ENCODE measurements at regions of chr7 and their contacts with region 1.

Region 1: DNA sequence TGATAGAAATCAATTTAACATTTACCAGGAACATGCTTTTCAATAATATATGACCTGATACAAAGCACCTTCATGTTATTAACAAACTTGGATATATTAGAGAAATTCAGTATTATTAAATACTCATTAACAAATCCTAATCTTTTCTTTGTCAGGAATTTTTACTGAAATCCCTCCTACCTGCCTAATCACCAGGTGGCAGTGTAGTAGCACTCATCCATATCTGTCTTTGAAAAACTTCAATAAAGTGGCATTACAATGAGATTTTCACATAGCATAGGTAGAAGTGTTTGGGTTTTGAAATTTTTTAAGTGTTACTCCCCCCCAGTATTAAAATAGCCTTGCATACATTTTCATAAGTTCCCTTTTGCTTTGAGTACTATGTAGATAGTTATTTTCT is 1246.6 kb upstream of the LRRN3 start:
- DNase-seq: no peak
- H3K4me3 ChIP-seq: no peak overlapping the region
- H3K27ac ChIP-seq: no peak overlapping the region
- H3K4me1 ChIP-seq: no peaks in the 10 kb centered on the region
- H3K27me3 ChIP-seq: no peaks in the 10 kb centered on the region
- CTCF ChIP-seq: peak; percentile 16 to 51 (median 32)
- POLR2A ChIP-seq: no peak

Region 2: GRCh38 chr7:111735661-111736551 is 1891.5 kb after region 1 on chr7:
- intact Hi-C with region 1: loop called in 1 of 2 experiments (anchors 10 kb)
- DNase-seq: peak; percentile 38 to 79 (median 68)
- H3K4me3 ChIP-seq: peak overlapping the region in 1 of 4 donors; percentile 20
- H3K27ac ChIP-seq: no peak overlapping the region
- H3K4me1 ChIP-seq: peaks cover 7 to 14% of the 10 kb centered on the region in 2 donors
- H3K27me3 ChIP-seq: no peaks in the 10 kb centered on the region
- CTCF ChIP-seq: peak; percentile 72 to 93 (median 88)
- POLR2A ChIP-seq: no peak